PC-3 (cell line): ENCODE measurements at regions of chr1 and their contacts with region 1.

Region 1: DNA sequence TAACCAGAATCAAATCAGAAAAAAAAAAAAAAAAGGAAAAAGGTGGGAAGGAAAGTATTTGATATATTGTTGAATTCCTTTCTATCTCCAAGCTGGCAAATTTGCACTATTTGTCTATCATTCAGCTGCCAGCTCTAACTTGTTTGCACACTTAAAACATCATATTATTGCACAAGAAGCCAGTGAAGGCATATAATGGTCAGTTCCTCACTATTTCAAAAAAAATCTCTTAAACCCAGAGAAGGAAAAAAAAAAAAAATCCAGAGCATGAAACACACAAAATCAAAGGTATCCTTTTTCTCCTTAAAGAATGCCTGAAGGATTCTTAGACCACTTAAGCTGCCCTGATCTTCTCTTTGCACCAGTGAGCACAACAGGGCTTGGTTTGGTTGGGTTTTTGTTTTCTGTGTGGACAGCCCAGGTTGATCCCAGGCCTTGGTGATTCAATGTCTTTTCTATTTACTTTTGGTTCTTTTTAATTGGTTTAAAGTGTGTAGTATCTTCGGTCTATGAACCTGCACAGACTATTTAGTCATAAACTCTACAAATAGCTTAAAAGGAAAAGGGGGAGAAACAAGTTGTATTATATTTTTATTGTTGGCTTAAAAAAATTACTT is 40.2 kb downstream of the DUSP10 start:
- DNase-seq: peak; percentile 33
- ATAC-seq: peak; percentile 95
- H3K4me3 ChIP-seq: no peak overlapping the region
- H3K27ac ChIP-seq: no peak overlapping the region
- H3K4me1 ChIP-seq: peaks cover 10% of the 10 kb centered on the region
- H3K27me3 ChIP-seq: no peaks in the 10 kb centered on the region
- CTCF ChIP-seq: no peak

Region 2: GRCh38 chr1:221527886-221528624 is 173.6 kb before region 1 on chr1:
- CTCF ChIA-PET with region 1: no interaction called
- POLR2A ChIA-PET with region 1: no interaction called
- intact Hi-C with region 1: no loop called
- DNase-seq: no peak
- ATAC-seq: no peak
- H3K4me3 ChIP-seq: no peak overlapping the region
- H3K27ac ChIP-seq: no peak overlapping the region
- H3K4me1 ChIP-seq: no peaks in the 10 kb centered on the region
- H3K27me3 ChIP-seq: no peaks in the 10 kb centered on the region
- CTCF ChIP-seq: no peak

Region 3: GRCh38 chr1:221712198-221712684 is 10.6 kb after region 1 on chr1:
- CTCF ChIA-PET with region 1: no interaction called
- POLR2A ChIA-PET with region 1: no interaction called
- intact Hi-C with region 1: loop called (anchors 1 kb)
- DNase-seq: peak; percentile 71
- ATAC-seq: peak; percentile 42
- H3K4me3 ChIP-seq: no peak overlapping the region
- H3K27ac ChIP-seq: peak overlapping the region; percentile 34
- H3K4me1 ChIP-seq: peaks cover 28% of the 10 kb centered on the region
- H3K27me3 ChIP-seq: no peaks in the 10 kb centered on the region
- CTCF ChIP-seq: no peak

Region 4: DNA sequence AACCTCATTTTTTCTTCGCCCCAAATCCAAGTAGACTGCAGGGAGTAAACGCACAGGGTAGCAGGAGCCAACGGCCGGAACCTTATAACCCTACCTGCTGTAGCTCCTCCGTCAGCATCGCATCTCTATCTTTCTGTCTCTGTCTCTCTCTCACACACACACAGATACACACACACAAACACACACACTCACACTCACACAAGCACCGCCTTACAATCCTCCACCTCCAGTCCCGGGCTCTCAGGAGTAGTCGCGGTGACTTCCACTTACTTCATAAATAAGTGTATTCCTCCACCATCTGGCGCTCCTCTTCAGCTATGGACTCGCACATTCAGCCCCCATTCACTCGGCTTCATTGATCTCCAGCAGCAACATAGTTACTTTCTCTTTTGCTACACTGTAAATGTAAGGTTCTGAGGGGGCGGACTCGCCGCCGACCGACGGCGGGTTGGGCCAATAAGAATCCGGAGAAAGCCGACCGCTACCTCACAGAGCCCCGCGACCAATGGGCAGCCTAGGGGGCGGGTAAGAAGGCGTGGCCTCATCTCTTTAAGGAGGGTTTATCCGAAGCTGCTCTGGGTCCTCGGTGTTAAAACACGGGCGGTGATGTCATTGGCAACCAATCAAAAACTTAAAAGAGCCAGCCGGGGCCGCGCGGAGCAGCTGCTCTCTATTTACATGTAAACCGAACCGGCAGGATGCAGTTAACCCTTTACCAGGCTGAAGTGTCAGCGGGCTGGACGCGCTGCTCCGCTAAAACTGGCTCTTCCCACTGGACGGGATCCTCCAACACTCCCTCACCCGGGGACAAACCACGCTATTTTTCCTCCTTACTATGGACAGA is 40.3 kb after region 1 on chr1 and contains the start of gene DUSP10:
- CTCF ChIA-PET with region 1: no interaction called
- POLR2A ChIA-PET with region 1: no interaction called
- intact Hi-C with region 1: no loop called
- DNase-seq: peak; percentile 100
- ATAC-seq: peak; percentile 82
- H3K4me3 ChIP-seq: peak within 1 kb of the TSS; percentile 89
- H3K27ac ChIP-seq: peak within 1 kb of the TSS; percentile 85
- H3K4me1 ChIP-seq: peaks cover 15% of the 10 kb centered on the region
- H3K27me3 ChIP-seq: no peaks in the 10 kb centered on the region
- CTCF ChIP-seq: no peak
- total RNA-seq, gene DUSP10: 5.1 and 6.2 TPM in 2 replicates